Activated naive CD4-positive, alpha-beta T cell treated with anti-CD3 and anti-CD28 coated beads for 36 hours (primary cell): ENCODE measurements at regions of chr13 and their contacts with region 1.

Region 1: GRCh38 chr13:41061075-41061913 is at the start of gene WBP4:
- DNase-seq: peak; percentile 88
- H3K4me3 Mint-ChIP-seq: peak within 1 kb of the TSS; percentile 95
- H3K27ac Mint-ChIP-seq: peak within 1 kb of the TSS; percentile 98
- H3K4me1 Mint-ChIP-seq: peaks cover 45% of the 10 kb centered on the region
- H3K27me3 Mint-ChIP-seq: peaks cover 4% of the 10 kb centered on the region
- total RNA-seq, gene WBP4: 8.1 to 8.2 TPM

Region 2: DNA sequence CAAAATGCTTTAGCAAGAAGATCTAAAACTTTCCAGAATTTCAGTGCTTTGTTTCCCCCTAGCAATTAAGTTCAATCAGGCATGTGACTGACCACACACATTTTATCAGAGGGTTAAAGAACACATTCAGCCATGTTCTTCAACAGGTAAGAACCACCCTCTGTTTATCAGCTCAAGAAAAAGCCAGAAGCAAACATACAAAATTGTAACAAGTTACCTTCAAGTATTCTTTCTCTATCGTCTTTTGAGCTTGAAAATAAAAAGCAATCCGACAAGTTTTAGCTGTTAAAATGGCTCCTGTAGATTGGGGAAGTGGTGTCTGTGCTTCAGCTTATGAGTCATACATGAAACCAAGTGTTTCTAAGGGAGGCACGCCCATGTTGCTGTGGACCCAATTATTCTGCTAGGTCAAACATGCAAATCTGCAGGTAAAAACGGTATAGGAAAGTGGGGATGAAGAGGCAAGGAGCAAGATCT is 42.2 kb before region 1 on chr13 and contains the start of gene ELF1:
- CTCF ChIA-PET with region 1: interaction called, 6 read pairs
- intact Hi-C with region 1: loop called (anchors 1 kb)
- DNase-seq: peak; percentile 67
- H3K4me3 Mint-ChIP-seq: peak within 1 kb of the TSS; percentile 89
- H3K27ac Mint-ChIP-seq: peak within 1 kb of the TSS; percentile 99
- H3K4me1 Mint-ChIP-seq: peaks cover 32% of the 10 kb centered on the region
- H3K27me3 Mint-ChIP-seq: no peaks in the 10 kb centered on the region
- total RNA-seq, gene ELF1: 61.7 to 62.3 TPM

Region 3: DNA sequence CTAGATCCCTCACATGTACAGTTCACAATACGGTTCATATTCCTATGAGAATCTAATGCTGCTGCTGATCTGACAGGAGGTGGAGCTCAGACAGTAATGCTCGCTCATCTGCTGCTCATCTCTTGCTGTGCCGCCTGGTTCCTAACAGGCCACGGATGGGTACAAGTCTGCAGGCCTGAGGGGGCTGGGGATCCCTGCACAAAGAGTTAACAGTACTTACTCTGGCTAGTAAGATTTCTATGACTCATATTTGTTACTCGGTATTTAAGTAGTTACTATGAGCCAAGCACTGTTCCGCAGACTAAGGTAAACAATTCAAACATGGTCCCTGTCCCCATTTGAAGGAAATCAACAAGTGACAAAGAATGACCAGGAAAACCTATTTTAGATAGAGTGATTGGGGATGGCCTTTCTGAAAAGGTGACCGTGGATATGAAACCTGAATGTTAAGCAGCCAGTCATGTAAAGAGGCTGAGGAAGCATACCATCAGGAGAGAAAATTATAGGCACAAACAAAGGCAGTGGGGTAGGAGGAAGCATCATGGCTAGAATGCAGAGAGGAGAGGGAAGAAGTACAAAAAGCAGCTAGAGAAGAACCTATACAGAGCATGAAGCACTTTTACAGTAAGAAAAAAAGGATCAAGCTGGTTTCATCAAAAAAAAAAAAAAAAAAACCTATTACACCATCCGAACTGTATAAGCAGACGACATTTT is 20.5 kb before region 1 on chr13:
- CTCF ChIA-PET with region 1: no interaction called
- intact Hi-C with region 1: no loop called
- DNase-seq: no peak
- H3K4me3 Mint-ChIP-seq: no peak overlapping the region
- H3K27ac Mint-ChIP-seq: no peak overlapping the region
- H3K4me1 Mint-ChIP-seq: peaks cover 13% of the 10 kb centered on the region
- H3K27me3 Mint-ChIP-seq: no peaks in the 10 kb centered on the region

Region 4: GRCh38 chr13:41193919-41194824 is 132.9 kb after region 1 on chr13 and contains the start of gene KBTBD7:
- CTCF ChIA-PET with region 1: no interaction called
- intact Hi-C with region 1: loop called (anchors 1 kb)
- DNase-seq: peak; percentile 95
- H3K4me3 Mint-ChIP-seq: peak within 1 kb of the TSS; percentile 90
- H3K27ac Mint-ChIP-seq: peak within 1 kb of the TSS; percentile 89
- H3K4me1 Mint-ChIP-seq: peaks cover 37% of the 10 kb centered on the region
- H3K27me3 Mint-ChIP-seq: no peaks in the 10 kb centered on the region
- total RNA-seq, gene KBTBD7: 4.2 to 4.3 TPM

Region 5: DNA sequence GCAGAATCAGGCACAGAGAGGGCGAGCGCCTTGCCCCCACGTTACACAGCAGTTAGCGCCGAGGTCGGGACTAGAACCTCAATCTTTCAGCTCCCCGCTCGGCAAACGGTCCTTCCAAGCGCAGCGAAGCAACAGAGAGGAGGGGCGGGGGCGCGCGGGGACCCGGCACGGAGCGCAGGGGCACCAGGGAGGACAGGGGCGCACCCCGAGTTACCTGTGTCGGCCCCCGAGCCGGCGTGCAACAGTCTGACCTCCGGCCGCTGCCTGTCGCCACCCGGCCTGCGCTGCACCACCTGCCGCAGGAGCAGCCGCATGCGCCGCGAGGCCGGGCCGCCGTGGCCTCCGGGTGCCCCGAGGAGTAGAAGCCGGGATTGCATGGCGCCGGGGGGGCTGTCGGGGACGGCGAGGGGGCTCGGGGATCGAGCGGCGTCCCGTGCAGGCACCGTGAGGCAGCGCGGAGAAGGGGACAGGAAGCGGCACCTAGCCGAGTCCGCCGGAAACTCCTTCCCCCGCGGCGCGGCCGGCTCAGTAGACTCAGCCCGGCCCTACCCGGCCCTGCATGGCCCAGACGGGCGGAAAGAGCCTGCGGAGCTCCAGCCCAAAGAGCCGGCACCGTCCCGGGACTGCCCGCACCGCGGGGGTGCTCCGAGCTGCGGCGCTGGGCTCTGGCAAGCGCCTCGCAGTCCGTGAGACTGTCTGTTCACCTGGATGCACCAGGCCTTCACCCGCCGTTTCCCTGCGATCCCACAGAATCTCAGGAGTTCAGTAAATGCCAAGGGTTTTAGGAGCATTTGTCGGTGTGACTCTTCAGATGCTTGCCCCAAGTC is 899.6 kb after region 1 on chr13 and contains the start of gene VWA8:
- CTCF ChIA-PET with region 1: no interaction called
- intact Hi-C with region 1: loop called (anchors 5 kb)
- DNase-seq: peak; percentile 84
- H3K4me3 Mint-ChIP-seq: peak within 1 kb of the TSS; percentile 95
- H3K27ac Mint-ChIP-seq: peak within 1 kb of the TSS; percentile 92
- H3K4me1 Mint-ChIP-seq: peaks cover 53% of the 10 kb centered on the region
- H3K27me3 Mint-ChIP-seq: no peaks in the 10 kb centered on the region
- total RNA-seq, gene VWA8: 21.2 to 21.5 TPM